ENCODE measurements at regions of chr2 and their contacts with region 1.

Region 1: DNA sequence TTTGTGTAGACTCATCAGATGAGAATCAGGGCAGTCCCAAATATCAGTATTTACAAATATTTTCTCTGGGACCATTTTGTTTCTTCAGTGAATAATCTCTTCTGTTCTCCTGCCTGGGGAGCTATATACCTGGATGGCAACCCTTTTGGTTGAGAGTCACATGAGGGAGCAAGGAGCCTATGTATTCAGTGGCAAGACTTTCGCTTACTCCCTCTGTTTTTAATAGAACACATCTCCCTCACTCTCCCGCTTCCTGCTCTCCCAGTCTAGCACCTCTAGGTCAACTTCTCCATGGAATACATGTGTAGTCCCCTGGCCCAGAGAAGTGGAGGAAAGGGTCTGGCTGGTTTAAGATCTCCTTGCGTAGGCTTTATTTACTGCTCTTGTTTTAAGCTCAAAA is 600.3 kb downstream of the CCDC85A start:
- DNase-seq: no peak
- H3K4me3 ChIP-seq: no peak overlapping the region
- H3K27ac ChIP-seq: no peak overlapping the region
- H3K4me1 ChIP-seq: no peaks in the 10 kb centered on the region
- H3K27me3 ChIP-seq: no peaks in the 10 kb centered on the region
- CTCF ChIP-seq: no peak

Region 2: GRCh38 chr2:57022496-57022895 is 238.4 kb after region 1 on chr2:
- CTCF ChIA-PET with region 1: interaction called, 23 read pairs
- dilution Hi-C with region 1: no loop called
- in situ Hi-C with region 1: no loop called
- intact Hi-C with region 1: no loop called
- DNase-seq: no peak
- H3K4me3 ChIP-seq: no peak overlapping the region
- H3K27ac ChIP-seq: no peak overlapping the region
- H3K4me1 ChIP-seq: no peaks in the 10 kb centered on the region
- H3K27me3 ChIP-seq: no peaks in the 10 kb centered on the region
- CTCF ChIP-seq: no peak

Measured in mammary epithelial cell (primary cell).